ENCODE measurements at regions of chr10 and their contacts with region 1.

Region 1: GRCh38 chr10:104268716-104269645 is at the start of gene GSTO2:
- DNase-seq: peak; percentile 95
- ATAC-seq: peak; percentile 98
- H3K4me3 Mint-ChIP-seq: peak within 1 kb of the TSS; percentile 85
- H3K27ac Mint-ChIP-seq: peak within 1 kb of the TSS; percentile 86
- H3K4me1 Mint-ChIP-seq: peaks cover 27% of the 10 kb centered on the region
- H3K27me3 Mint-ChIP-seq: no peaks in the 10 kb centered on the region
- total RNA-seq, gene GSTO2: 1.4 TPM

Region 2: GRCh38 chr10:103923502-103923901 is 345.5 kb before region 1 on chr10:
- POLR2A ChIA-PET with region 1: no interaction called
- DNase-seq: no peak
- ATAC-seq: no peak
- H3K4me3 Mint-ChIP-seq: no peak overlapping the region
- H3K27ac Mint-ChIP-seq: no peak overlapping the region
- H3K4me1 Mint-ChIP-seq: peaks cover 4% of the 10 kb centered on the region
- H3K27me3 Mint-ChIP-seq: peaks cover 2% of the 10 kb centered on the region

Region 3: DNA sequence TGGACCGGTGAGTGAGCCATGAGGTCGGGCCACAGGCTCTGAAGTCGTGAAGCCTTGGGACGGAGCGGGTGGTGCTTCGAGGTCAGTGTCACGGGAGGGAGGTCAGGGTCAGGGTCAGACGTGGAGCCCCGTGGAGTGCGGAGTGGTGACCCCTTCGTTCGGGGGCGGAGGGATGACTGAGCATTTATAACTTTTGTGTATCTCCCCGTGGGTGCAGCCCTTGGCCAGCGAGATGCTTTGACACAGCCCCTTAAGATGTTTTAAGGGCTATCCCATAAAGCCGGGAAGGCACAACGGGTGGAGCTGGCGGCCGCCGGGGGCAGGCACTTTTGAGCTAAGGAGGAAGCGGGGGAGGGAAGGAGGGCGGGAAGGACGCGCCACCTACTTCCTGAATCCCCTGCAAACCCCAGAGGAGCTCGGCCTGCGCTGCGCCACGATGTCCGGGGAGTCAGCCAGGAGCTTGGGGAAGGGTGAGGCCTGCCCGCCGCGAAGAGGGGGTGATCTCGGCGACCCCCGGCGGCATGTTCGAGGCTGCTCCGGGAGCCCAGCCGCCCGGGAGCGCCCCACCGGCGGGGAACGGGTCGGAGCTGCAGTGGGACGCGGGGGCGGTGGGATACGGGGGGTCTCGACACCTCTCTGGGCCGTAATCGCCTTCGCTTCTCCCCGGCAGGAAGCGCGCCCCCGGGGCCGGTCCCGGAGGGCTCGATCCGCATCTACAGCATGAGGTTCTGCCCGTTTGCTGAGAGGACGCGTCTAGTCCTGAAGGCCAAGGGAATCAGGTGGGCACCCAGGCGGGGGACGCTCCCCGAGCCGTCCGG is 14.3 kb before region 1 on chr10 and contains the start of gene GSTO1:
- POLR2A ChIA-PET with region 1: interaction called, 29 read pairs
- DNase-seq: peak; percentile 60
- ATAC-seq: peak; percentile 70
- H3K4me3 Mint-ChIP-seq: peak within 1 kb of the TSS; percentile 99
- H3K27ac Mint-ChIP-seq: peak within 1 kb of the TSS; percentile 93
- H3K4me1 Mint-ChIP-seq: peaks cover 47% of the 10 kb centered on the region
- H3K27me3 Mint-ChIP-seq: peaks cover 10% of the 10 kb centered on the region
- total RNA-seq, gene GSTO1: 92.2 to 97.7 TPM